ENCODE measurements at regions of chr16 and their contacts with region 1.

Region 1: GRCh38 chr16:85821441-85822135 is 22.1 kb downstream of the COX4I1 start:
- DNase-seq: peak; percentile 61
- H3K4me3 Mint-ChIP-seq: no peak overlapping the region
- H3K27ac Mint-ChIP-seq: no peak overlapping the region
- H3K4me1 Mint-ChIP-seq: no peaks in the 10 kb centered on the region
- H3K27me3 Mint-ChIP-seq: peaks cover 5% of the 10 kb centered on the region

Region 2: GRCh38 chr16:85898521-85899442 is 77.2 kb after region 1 on chr16 and contains the start of gene IRF8:
- intact Hi-C with region 1: loop called (anchors 2 kb)
- DNase-seq: peak; percentile 52
- H3K4me3 Mint-ChIP-seq: peak within 1 kb of the TSS; percentile 85
- H3K27ac Mint-ChIP-seq: peak within 1 kb of the TSS; percentile 56
- H3K4me1 Mint-ChIP-seq: peaks cover 48% of the 10 kb centered on the region
- H3K27me3 Mint-ChIP-seq: peaks cover 24% of the 10 kb centered on the region
- total RNA-seq, gene IRF8: 37.8 and 40.1 TPM in 2 replicates

Region 3: GRCh38 chr16:86016201-86016871 is 194.7 kb after region 1 on chr16:
- intact Hi-C with region 1: loop called (anchors 1 kb)
- DNase-seq: no peak
- H3K4me3 Mint-ChIP-seq: no peak overlapping the region
- H3K27ac Mint-ChIP-seq: no peak overlapping the region
- H3K4me1 Mint-ChIP-seq: peaks cover 2% of the 10 kb centered on the region
- H3K27me3 Mint-ChIP-seq: peaks cover 4% of the 10 kb centered on the region

Measured in activated T-helper 2 cell treated with anti-CD3 and anti-CD28 coated beads, Interferon-gamma antibody, Interleukin-2, Interleukin-4, amounts not matched to agents 10 μg/mL and 5 μg/mL and 100 μg/mL, durations not matched to agents 14 hours and 24 hours and 36 hours (primary cell).